ENCODE measurements at regions of chr11 and their contacts with region 1.

Region 1: GRCh38 chr11:34051349-34052035 is at the start of gene CAPRIN1:
- DNase-seq: peak; percentile 85
- H3K4me3 Mint-ChIP-seq: peak within 1 kb of the TSS; percentile 98
- H3K27ac Mint-ChIP-seq: peak within 1 kb of the TSS; percentile 96
- H3K4me1 Mint-ChIP-seq: peaks cover 24% of the 10 kb centered on the region
- H3K27me3 Mint-ChIP-seq: peaks cover 6% of the 10 kb centered on the region
- total RNA-seq, gene CAPRIN1: 202 to 221 TPM

Region 2: DNA sequence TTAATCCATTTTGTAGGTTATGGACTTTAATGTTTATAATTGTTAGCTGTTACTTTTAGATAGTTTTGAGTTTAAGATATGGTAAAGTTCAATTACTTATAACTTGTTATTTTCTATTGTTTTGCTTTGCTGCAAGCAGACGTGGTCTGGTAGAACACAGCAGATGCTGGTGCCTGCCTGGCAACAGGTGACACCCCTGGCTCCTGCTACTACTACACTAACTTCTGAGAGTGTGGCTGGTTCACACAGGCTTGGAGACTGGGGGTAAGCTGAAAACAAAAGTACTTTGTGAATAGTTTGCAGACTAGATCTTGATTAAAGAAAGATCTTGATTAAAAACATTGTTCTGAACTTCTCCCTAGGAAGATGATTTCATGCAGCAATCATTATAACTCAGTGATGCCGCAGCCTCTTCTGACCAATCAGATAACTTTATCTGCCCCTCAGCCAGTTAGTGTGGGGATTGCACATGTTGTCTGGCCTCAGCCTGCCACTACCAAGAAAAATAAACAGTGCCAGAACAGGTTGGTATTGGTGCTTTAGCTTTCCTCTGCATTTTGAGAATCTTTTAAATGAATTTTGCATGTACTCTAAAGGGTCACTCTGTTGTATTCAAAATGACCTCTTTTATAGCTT is 703.9 kb before region 1 on chr11:
- CTCF ChIA-PET with region 1: no interaction called
- POLR2A ChIA-PET with region 1: no interaction called
- DNase-seq: no peak
- H3K4me3 Mint-ChIP-seq: no peak overlapping the region
- H3K27ac Mint-ChIP-seq: no peak overlapping the region
- H3K4me1 Mint-ChIP-seq: no peaks in the 10 kb centered on the region
- H3K27me3 Mint-ChIP-seq: no peaks in the 10 kb centered on the region

Region 3: GRCh38 chr11:34105079-34105956 is 53.8 kb after region 1 on chr11 and contains the start of gene NAT10:
- CTCF ChIA-PET with region 1: interaction called, 6 read pairs
- POLR2A ChIA-PET with region 1: interaction called, 10 read pairs
- DNase-seq: peak; percentile 98
- H3K4me3 Mint-ChIP-seq: peak within 1 kb of the TSS; percentile 87
- H3K27ac Mint-ChIP-seq: peak within 1 kb of the TSS; percentile 99
- H3K4me1 Mint-ChIP-seq: peaks cover 51% of the 10 kb centered on the region
- H3K27me3 Mint-ChIP-seq: no peaks in the 10 kb centered on the region
- total RNA-seq, gene NAT10: 73.4 to 82.2 TPM

Measured in activated CD4-positive, alpha-beta T cell treated with anti-CD3 and anti-CD28 coated beads, Interleukin-2, amount 10 ng/mL, durations not matched to agents 7 days and 5 days (primary cell).